Prostate gland (tissue), 2 donors: ENCODE measurements at regions of chr6 and their contacts with region 1.

Region 1: DNA sequence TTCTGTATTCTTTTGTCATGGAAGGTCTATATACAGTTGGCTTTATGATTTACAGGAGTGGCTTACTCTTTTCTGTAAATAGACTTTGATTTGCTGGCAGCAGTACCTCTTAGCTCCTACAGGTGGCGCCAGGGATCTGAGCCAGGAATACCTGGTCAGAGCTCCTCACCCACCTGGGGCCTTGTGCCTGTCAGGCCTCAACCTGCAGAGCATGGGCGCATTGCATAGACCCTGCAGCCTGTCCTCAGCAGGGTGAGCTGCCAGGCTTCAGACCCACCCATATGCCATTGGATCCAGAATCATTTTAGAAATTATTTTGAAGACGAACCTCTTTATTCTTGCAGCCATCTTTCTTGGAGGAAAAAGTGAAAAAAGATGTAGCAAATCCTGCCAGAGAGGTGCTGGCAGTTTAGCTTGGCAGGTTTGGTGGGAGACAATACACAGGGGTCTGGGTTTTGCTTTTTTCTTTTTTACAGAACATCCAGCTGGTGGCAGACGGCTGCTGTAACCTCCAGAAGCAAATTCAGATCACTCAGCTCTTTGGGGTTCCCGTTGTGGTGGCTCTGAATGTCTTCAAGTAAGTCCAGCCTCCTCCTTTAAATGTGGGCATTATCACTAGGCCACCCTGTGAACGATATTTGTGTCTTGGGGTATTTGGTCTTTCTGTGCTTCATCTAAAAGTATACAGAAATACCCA is 149.1 kb downstream of the MTHFD1L start:
- DNase-seq: peak; percentile 74
- H3K4me3 ChIP-seq: no peak overlapping the region
- H3K27ac ChIP-seq: no peak overlapping the region
- H3K4me1 ChIP-seq: no peaks in the 10 kb centered on the region
- H3K27me3 ChIP-seq: no peaks in the 10 kb centered on the region
- CTCF ChIP-seq: peak; percentile 97 to 98 (median 97)
- POLR2A ChIP-seq: no peak

Region 2: DNA sequence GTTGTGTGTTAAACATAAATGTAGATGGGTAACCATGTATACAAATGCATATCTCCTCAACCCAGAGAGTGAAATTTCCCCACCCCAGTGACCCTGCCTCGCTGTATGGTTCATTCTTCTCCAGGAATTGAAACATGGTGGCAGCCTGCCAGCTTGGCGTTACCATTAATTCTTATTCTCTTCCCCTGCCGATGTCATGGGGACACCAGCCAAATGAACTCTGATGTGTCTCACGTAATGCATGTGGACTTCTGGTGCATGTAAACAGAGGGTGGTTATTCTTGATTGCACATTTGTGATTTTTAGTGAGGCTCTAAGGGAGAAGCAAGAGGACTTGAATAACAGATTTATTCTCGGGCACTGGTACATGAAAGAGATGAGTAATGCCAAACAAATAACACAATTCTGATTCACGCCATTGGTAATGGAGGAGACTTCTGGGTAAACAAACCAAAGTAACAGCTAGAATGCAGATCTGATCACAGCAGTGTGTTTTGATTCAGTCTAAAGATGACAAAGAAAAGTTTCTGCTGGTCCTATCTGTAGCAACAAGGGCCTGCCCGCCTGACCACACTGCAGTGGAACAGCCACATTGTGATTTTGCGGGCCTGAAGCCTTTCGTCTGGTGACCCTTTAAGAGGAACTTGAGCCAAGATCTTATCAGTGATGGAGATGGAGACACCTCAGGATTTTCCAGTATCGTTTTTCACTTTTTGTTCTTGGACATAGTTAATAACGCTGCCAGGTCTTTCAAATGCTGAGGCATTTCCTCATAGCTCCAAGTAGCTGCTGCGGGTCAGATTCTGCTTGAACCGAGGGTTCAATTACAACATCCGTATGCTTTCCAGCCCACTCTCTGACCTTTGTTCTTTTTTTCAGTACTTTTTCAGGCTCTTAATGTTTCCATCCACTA is 53.4 kb after region 1 on chr6:
- intact Hi-C with region 1: no loop called
- DNase-seq: peak; percentile 25
- H3K4me3 ChIP-seq: no peak overlapping the region
- H3K27ac ChIP-seq: peak overlapping the region; percentile 34 to 50
- H3K4me1 ChIP-seq: no peaks in the 10 kb centered on the region
- H3K27me3 ChIP-seq: no peaks in the 10 kb centered on the region
- CTCF ChIP-seq: no peak
- POLR2A ChIP-seq: no peak

Region 3: DNA sequence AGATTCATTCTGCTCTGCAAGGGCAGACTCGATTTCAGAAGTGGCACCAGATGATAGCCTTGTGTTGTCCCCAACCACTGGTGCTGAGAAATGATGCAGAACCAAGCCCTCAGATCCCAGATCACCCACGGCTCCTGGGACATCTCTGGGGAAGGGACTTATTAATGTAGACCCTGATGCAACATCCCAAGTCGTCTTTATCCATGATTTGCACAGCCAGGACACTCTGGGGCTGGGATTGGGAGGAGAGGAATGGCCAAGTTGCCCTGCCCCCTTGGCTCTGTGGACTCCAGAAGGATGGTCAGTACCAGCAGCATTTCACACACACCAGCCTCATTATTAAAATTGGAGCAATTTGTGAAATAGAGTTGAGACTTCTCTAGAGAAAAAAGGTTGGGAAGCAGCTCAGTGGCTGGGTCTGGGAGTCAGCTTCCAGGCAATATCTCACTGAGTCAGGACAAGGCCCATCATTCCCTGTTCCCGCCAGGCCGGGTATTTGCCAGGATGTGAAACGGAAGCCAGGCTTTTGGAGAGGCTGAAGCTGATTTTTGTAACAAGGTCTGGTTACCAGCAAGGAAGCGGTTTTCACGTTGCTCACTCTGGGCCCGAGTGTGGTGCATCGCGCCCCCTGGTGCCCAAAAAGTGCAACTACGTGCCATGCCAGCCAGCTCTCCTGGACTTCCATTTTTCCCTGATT is 309.4 kb after region 1 on chr6:
- intact Hi-C with region 1: loop called (anchors 2 kb)
- DNase-seq: peak; percentile 61
- H3K4me3 ChIP-seq: no peak overlapping the region
- H3K27ac ChIP-seq: no peak overlapping the region
- H3K4me1 ChIP-seq: peaks cover 17% of the 10 kb centered on the region
- H3K27me3 ChIP-seq: no peaks in the 10 kb centered on the region
- CTCF ChIP-seq: peak; percentile 94 to 97 (median 96)
- POLR2A ChIP-seq: no peak